GM12878 (cell line): ENCODE measurements at regions of chr5 and their contacts with region 1.

Region 1: DNA sequence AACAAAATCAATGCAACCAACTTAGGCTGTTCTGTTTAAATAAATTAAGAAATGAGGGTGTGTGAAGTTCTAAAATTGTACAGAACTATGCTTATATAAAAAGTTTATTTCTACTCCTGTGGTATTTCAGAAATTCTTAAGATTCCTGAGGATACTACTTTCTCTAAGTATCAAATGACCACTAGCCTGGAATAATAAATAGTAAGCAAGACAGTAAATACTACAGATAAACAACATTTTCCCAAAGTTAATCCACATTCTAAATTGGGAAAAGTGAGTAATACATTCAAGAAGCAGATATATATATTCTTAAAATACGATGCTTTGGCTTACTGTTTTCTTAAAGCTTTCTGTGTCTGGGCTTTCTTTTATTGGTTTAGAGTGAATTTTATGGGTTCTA is 29.5 kb downstream of the CCNH start:
- DNase-seq: no peak
- ATAC-seq: no peak
- H3K4me3 ChIP-seq: no peak overlapping the region
- H3K27ac ChIP-seq: no peak overlapping the region
- H3K4me1 ChIP-seq: no peaks in the 10 kb centered on the region
- H3K27me3 ChIP-seq: no peaks in the 10 kb centered on the region
- CTCF ChIP-seq: no peak
- EP300 ChIP-seq: no peak
- POLR2A ChIP-seq: no peak
- RAD21 ChIP-seq: no peak

Region 2: DNA sequence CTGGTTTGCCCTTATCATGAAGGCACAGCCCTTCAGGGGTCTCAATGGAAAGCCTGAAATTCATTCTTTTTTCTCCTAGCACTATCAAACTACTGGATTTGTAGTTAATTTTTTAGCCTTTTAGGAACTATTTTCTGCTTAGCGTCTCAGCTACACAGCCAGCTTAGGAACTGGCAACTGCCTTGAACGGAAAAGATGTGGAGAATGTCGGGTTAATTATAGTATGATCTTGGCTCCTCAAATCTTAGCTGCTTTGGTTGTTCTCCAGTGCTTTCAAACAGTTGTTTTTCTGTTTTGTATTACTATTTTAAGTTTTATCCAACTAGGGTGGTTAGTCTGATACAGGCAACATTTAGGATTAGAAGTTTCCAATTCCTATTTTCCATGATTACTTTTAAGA is 14.6 kb before region 1 on chr5:
- CTCF ChIA-PET with region 1: interaction called, 6 read pairs
- POLR2A ChIA-PET with region 1: no interaction called
- RAD21 ChIA-PET with region 1: interaction called, 3 read pairs
- SMC1A ChIA-PET with region 1: interaction called, 10 read pairs
- in situ Hi-C with region 1: no loop called
- intact Hi-C with region 1: no loop called
- DNase-seq: no peak
- ATAC-seq: no peak
- H3K4me3 ChIP-seq: no peak overlapping the region
- H3K27ac ChIP-seq: no peak overlapping the region
- H3K4me1 ChIP-seq: no peaks in the 10 kb centered on the region
- H3K27me3 ChIP-seq: no peaks in the 10 kb centered on the region
- CTCF ChIP-seq: no peak
- EP300 ChIP-seq: no peak
- POLR2A ChIP-seq: no peak
- RAD21 ChIP-seq: no peak

Region 3: GRCh38 chr5:87393331-87393730 is 10.1 kb after region 1 on chr5:
- CTCF ChIA-PET with region 1: interaction called, 10 read pairs
- POLR2A ChIA-PET with region 1: interaction called, 4 read pairs
- RAD21 ChIA-PET with region 1: interaction called, 3 read pairs
- SMC1A ChIA-PET with region 1: interaction called, 6 read pairs
- in situ Hi-C with region 1: no loop called
- intact Hi-C with region 1: no loop called
- DNase-seq: no peak
- ATAC-seq: no peak
- H3K4me3 ChIP-seq: no peak overlapping the region
- H3K27ac ChIP-seq: no peak overlapping the region
- H3K4me1 ChIP-seq: no peaks in the 10 kb centered on the region
- H3K27me3 ChIP-seq: no peaks in the 10 kb centered on the region
- CTCF ChIP-seq: no peak
- EP300 ChIP-seq: no peak
- POLR2A ChIP-seq: no peak
- RAD21 ChIP-seq: no peak

Region 4: DNA sequence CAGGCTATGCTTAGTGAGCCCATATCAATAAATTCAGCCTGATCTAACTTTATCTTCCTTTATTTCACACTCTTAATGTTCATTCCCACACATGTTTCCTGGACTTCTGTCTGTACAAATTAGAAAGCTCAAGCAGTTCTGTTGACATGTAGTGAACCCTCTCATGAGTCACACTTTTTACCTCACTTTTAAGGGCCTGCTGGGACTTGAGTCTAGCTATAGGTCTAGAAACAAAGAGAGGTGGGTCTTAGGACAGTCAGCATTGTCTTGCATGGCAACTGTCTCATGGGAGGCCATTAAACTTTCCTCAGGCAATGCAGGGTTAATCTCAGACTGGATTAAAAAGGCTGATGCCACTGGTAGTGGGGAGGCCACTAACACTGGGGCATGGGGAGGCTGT is 38.1 kb after region 1 on chr5:
- CTCF ChIA-PET with region 1: no interaction called
- POLR2A ChIA-PET with region 1: no interaction called
- RAD21 ChIA-PET with region 1: no interaction called
- SMC1A ChIA-PET with region 1: no interaction called
- in situ Hi-C with region 1: no loop called
- intact Hi-C with region 1: no loop called
- DNase-seq: no peak
- ATAC-seq: no peak
- H3K4me3 ChIP-seq: no peak overlapping the region
- H3K27ac ChIP-seq: no peak overlapping the region
- H3K4me1 ChIP-seq: no peaks in the 10 kb centered on the region
- H3K27me3 ChIP-seq: no peaks in the 10 kb centered on the region
- CTCF ChIP-seq: no peak
- EP300 ChIP-seq: no peak
- POLR2A ChIP-seq: no peak
- RAD21 ChIP-seq: no peak

Region 5: DNA sequence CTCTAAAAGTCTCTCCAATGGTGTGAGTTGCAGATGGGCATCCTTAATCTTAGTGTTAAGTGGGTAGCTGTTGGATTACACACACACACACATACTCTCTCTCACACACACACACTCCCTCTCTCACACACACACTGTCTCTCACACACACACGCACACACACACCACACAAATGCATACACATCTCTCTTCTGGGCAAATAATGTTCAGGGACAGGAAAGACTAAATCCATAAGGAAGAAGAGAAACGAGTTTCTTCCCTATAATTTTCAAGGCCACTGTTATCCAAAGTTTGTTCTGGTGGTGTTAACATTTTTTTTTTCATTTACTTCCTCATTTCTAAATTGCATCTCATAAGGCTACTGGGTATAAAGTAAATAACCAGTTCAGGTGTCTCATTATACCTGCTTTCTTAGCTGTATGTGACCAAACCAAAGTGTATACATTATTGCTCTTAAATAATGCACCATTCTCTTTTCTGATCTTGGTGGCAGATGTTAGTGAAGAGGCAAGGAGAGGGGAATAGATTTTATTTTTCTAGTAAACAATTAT is 52.0 kb after region 1 on chr5:
- CTCF ChIA-PET with region 1: no interaction called
- POLR2A ChIA-PET with region 1: no interaction called
- RAD21 ChIA-PET with region 1: no interaction called
- SMC1A ChIA-PET with region 1: no interaction called
- in situ Hi-C with region 1: no loop called
- intact Hi-C with region 1: no loop called
- DNase-seq: no peak
- ATAC-seq: no peak
- H3K4me3 ChIP-seq: no peak overlapping the region
- H3K27ac ChIP-seq: no peak overlapping the region
- H3K4me1 ChIP-seq: no peaks in the 10 kb centered on the region
- H3K27me3 ChIP-seq: no peaks in the 10 kb centered on the region
- CTCF ChIP-seq: no peak
- EP300 ChIP-seq: no peak
- POLR2A ChIP-seq: no peak
- RAD21 ChIP-seq: no peak